ENCODE measurements at regions of chr2 and their contacts with region 1.

Region 1: DNA sequence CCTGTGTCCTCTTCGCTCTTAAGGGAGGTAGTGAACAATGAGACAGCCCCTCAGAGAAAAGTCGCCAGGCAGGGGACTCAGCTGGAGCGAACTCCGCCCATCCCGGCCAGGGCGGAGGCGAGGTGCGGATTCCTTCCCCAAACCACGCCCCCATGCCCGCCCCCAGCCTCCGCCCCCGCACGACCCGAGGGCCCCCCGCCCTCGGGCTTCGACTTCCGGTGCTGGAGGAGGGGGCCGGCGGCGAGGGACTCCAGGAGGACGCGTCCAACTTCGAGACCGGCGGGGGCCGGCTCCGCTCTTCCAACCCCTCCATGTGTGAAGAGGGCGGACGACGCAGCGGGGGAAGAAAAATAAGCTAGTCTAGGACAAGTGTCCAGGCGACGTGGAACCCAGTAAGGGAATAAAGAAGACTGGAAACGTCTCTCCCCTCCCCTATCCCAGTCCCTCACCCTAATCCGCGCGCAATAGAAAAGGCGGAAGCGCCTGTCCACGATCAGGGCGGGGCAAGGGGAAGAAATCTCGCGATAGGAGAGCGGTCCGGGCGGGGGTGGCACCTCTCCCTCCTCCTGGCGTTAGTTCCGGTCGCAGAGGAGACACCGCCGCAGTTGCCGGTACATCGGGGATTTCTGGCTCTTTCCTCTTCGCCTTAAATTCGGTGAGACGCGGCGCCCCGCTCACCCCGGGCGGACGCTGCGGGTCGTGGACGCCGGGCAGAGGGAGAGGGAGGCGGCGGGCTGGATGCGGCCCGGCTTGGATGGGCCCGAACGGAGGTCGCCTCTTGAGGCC is at the start of gene BZW1:
- DNase-seq: peak; percentile 99
- H3K4me3 Mint-ChIP-seq: peak within 1 kb of the TSS; percentile 99
- H3K27ac Mint-ChIP-seq: peak within 1 kb of the TSS; percentile 100
- H3K4me1 Mint-ChIP-seq: peaks cover 46% of the 10 kb centered on the region
- H3K27me3 Mint-ChIP-seq: no peaks in the 10 kb centered on the region
- total RNA-seq, gene BZW1: 423 to 442 TPM

Region 2: DNA sequence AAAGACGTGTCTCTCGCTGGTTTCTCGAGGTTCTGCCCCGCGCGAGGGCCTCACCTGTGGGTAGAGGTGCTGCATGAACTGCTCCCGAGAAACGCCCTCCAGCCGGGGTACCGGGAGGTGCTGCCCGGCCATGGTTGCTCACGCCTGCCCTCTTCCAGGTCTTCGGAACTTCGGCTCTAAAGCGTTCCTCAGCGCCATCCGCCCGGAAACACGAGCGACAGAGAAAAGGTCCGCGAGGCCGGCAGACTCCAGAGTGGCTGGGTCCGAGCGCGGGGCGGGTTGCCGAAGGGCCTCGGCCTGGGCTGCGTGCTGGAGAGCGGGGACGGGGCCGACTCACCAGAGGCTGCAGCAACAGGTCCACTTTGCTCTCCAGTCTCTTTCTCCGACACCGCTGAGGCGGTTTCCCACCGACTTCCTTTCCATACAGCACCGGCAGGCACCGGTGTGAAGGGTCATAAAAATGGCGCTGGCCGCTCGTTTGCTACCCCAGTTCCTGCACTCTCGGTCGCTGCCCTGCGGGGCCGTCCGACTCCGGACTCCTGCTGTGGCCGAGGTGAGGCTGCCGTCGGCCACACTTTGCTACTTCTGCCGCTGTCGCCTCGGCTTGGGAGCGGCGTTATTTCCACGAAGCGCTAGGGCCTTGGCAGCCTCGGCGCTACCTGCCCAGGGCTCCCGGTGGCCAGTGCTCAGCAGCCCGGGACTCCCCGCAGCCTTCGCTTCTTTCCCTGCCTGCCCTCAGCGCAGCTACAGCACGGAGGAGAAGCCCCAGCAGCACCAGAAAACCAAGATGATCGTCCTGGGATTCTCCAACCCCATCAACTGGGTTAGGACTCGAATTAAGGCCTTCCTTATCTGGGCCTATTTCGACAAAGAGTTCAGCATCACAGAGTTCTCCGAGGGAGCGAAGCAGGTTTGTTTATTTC is 855.9 kb before region 1 on chr2 and contains the starts of genes MAIP1 and TYW5:
- CTCF ChIA-PET with region 1: no interaction called
- intact Hi-C with region 1: loop called (anchors 1 kb)
- DNase-seq: peak; percentile 82
- H3K4me3 Mint-ChIP-seq: peak within 1 kb of the TSS; percentile 98
- H3K27ac Mint-ChIP-seq: peak within 1 kb of the TSS; percentile 92
- H3K4me1 Mint-ChIP-seq: peaks cover 45% of the 10 kb centered on the region
- H3K27me3 Mint-ChIP-seq: no peaks in the 10 kb centered on the region
- total RNA-seq, gene MAIP1: 28.6 to 30.0 TPM
- total RNA-seq, gene TYW5: 7.8 to 7.9 TPM

Region 3: DNA sequence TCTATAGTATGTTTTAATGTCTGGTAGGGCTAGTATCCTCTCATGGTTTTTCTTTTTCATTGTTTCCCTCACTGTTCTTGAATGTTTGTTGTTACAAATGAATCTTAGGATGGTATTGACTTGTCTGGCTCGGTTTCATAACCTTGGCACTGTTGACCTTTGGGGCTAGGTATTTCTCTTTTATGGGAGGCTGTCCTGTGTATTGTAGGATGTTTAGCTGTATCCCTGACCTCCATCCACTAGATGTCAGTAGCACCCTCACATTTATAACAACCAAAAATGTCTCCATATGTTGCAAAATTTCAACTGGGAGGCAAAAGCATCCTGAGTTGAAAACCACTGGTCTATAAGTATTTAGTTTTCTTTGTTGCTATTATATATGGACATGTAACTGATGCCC is 232.8 kb before region 1 on chr2:
- CTCF ChIA-PET with region 1: no interaction called
- intact Hi-C with region 1: loop called (anchors 5 kb)
- DNase-seq: peak; percentile 18
- H3K4me3 Mint-ChIP-seq: no peak overlapping the region
- H3K27ac Mint-ChIP-seq: peak overlapping the region; percentile 16
- H3K4me1 Mint-ChIP-seq: peaks cover 14% of the 10 kb centered on the region
- H3K27me3 Mint-ChIP-seq: no peaks in the 10 kb centered on the region

Region 4: DNA sequence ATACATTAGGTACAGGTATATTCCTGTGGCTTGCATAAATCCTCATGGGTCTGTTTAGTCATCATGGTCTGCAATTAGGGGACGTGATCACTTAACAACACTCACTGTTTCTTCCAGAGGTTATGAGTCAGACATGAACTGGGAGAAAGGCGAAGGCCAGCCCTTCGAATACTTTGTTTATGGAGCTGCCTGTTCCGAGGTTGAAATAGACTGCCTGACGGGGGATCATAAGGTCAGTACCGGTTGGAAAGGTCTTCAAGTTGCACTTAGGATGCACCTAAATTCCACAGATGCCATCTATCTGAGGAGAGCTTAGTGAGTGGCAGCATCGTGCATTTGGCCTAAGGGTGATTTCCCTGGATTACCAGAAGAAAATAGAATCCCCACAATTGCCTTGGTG is 148.8 kb before region 1 on chr2:
- CTCF ChIA-PET with region 1: no interaction called
- intact Hi-C with region 1: no loop called
- DNase-seq: no peak
- H3K4me3 Mint-ChIP-seq: no peak overlapping the region
- H3K27ac Mint-ChIP-seq: no peak overlapping the region
- H3K4me1 Mint-ChIP-seq: peaks cover 2% of the 10 kb centered on the region
- H3K27me3 Mint-ChIP-seq: peaks cover 16% of the 10 kb centered on the region

Region 5: DNA sequence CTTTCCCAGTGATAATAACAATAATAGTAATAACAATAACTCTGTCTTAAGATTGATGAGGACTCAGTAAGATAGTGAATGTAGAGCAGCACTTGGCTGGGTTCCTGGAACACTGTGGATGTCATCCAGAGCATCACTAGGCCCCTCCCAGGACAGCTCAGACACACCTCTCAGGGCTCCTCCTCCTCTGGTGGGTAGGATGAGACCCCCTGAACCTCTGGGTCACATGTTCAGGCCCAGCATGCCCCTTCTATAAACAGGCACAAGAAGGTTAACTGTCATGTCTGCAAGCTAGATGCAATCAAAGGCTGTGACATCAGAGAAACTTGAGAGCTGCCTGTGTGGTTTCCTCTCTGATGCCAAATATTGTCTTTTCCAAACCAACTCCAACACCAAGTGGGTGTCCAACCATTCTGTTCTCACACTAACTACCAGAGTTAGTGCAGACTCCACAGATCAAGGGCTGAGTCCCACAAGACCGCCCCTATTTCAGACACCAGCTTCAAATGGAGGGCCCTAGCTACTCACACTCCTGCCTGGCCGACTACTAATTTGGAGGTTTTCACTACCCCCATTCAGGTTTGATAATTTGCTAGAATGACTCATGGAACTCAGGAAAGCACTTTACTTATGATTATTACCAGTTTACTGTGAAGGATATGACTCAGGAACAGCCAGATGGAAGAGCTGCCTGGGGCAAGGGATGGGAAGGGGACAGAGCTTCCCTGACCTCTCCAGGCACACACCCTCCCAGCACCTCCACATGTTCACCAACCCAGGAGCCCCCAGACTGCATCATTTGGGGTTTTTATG is 46.2 kb before region 1 on chr2:
- CTCF ChIA-PET with region 1: interaction called, 8 read pairs
- intact Hi-C with region 1: loop called (anchors 1 kb)
- DNase-seq: peak; percentile 70
- H3K4me3 Mint-ChIP-seq: peak overlapping the region; percentile 32
- H3K27ac Mint-ChIP-seq: peak overlapping the region; percentile 92
- H3K4me1 Mint-ChIP-seq: peaks cover 27% of the 10 kb centered on the region
- H3K27me3 Mint-ChIP-seq: no peaks in the 10 kb centered on the region

Region 6: GRCh38 chr2:200963124-200963917 is 151.8 kb after region 1 on chr2 and contains the start of gene ORC2:
- CTCF ChIA-PET with region 1: no interaction called
- intact Hi-C with region 1: loop called (anchors 1 kb)
- DNase-seq: peak; percentile 94
- H3K4me3 Mint-ChIP-seq: peak within 1 kb of the TSS; percentile 88
- H3K27ac Mint-ChIP-seq: peak within 1 kb of the TSS; percentile 94
- H3K4me1 Mint-ChIP-seq: peaks cover 56% of the 10 kb centered on the region
- H3K27me3 Mint-ChIP-seq: no peaks in the 10 kb centered on the region
- total RNA-seq, gene ORC2: 53.7 to 56.8 TPM

Region 7: GRCh38 chr2:201182650-201183364 is 371.3 kb after region 1 on chr2 and contains the start of gene CASP10:
- CTCF ChIA-PET with region 1: no interaction called
- intact Hi-C with region 1: loop called (anchors 5 kb)
- DNase-seq: peak; percentile 32
- H3K4me3 Mint-ChIP-seq: peak within 1 kb of the TSS; percentile 97
- H3K27ac Mint-ChIP-seq: peak within 1 kb of the TSS; percentile 96
- H3K4me1 Mint-ChIP-seq: peaks cover 39% of the 10 kb centered on the region
- H3K27me3 Mint-ChIP-seq: no peaks in the 10 kb centered on the region
- total RNA-seq, gene CASP10: 22.0 to 22.1 TPM

Region 8: GRCh38 chr2:201580486-201580885 is 769.0 kb after region 1 on chr2:
- CTCF ChIA-PET with region 1: no interaction called
- intact Hi-C with region 1: no loop called
- DNase-seq: no peak
- H3K4me3 Mint-ChIP-seq: no peak overlapping the region
- H3K27ac Mint-ChIP-seq: no peak overlapping the region
- H3K4me1 Mint-ChIP-seq: no peaks in the 10 kb centered on the region
- H3K27me3 Mint-ChIP-seq: no peaks in the 10 kb centered on the region

Measured in activated naive CD4-positive, alpha-beta T cell treated with anti-CD3 and anti-CD28 coated beads for 36 hours (primary cell).